Transverse colon (tissue), 4 donors: ENCODE measurements at regions of chr22 and their contacts with region 1.

Region 1: GRCh38 chr22:32528984-32529982 is 54.7 kb downstream of the FBXO7 start:
- DNase-seq: peak; percentile 87
- H3K4me3 ChIP-seq: no peak overlapping the region
- H3K27ac ChIP-seq: peak overlapping the region; percentile 27 to 76 (median 64)
- H3K4me1 ChIP-seq: peaks cover 7 to 38% (median 21%) of the 10 kb centered on the region in 4 donors
- H3K27me3 ChIP-seq: no peaks in the 10 kb centered on the region
- CTCF ChIP-seq: peak; percentile 85 to 93 (median 86)
- EP300 ChIP-seq: no peak
- POLR2A ChIP-seq: no peak

Region 2: DNA sequence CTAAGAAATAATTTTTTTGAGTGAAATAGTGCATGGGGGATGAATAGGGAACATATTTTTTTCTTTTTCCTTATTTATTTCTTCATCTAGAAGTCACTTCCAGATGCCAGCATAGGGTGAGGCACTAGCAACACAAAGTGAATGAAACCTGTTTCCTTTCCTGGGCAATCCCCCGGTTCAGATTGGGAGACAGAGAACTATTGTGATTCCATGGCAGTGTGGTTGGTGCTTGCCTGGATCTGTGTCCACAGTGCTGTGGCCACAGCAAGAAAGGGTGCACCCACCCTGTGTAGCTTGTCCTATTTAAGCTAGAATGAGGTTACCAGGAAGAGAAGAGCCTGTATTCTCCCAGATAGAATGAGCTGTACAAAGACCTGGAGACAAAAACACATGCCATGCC is 428.6 kb before region 1 on chr22:
- in situ Hi-C with region 1: no loop called
- intact Hi-C with region 1: no loop called
- DNase-seq: no peak
- H3K4me3 ChIP-seq: no peak overlapping the region
- H3K27ac ChIP-seq: no peak overlapping the region
- H3K4me1 ChIP-seq: no peaks in the 10 kb centered on the region
- H3K27me3 ChIP-seq: no peaks in the 10 kb centered on the region
- CTCF ChIP-seq: no peak
- EP300 ChIP-seq: no peak
- POLR2A ChIP-seq: no peak

Region 3: GRCh38 chr22:32622004-32622743 is 92.9 kb after region 1 on chr22:
- in situ Hi-C with region 1: no loop called
- intact Hi-C with region 1: loop called (anchors 10 kb)
- DNase-seq: peak; percentile 44
- H3K4me3 ChIP-seq: no peak overlapping the region
- H3K27ac ChIP-seq: peak overlapping the region; percentile 70 to 87 (median 82)
- H3K4me1 ChIP-seq: peaks cover 16 to 41% (median 27%) of the 10 kb centered on the region in 4 donors
- H3K27me3 ChIP-seq: no peaks in the 10 kb centered on the region
- CTCF ChIP-seq: no peak
- EP300 ChIP-seq: no peak
- POLR2A ChIP-seq: no peak

Region 4: GRCh38 chr22:32789797-32790620 is 260.7 kb after region 1 on chr22:
- in situ Hi-C with region 1: loop called (anchors 10 to 25 kb)
- intact Hi-C with region 1: loop called (anchors 2 kb)
- DNase-seq: no peak
- H3K4me3 ChIP-seq: no peak overlapping the region
- H3K27ac ChIP-seq: peak overlapping the region in 3 of 4 donors; percentile 5 to 43 (median 15)
- H3K4me1 ChIP-seq: no peaks in the 10 kb centered on the region
- H3K27me3 ChIP-seq: no peaks in the 10 kb centered on the region
- CTCF ChIP-seq: no peak
- EP300 ChIP-seq: no peak
- POLR2A ChIP-seq: no peak

Region 5: DNA sequence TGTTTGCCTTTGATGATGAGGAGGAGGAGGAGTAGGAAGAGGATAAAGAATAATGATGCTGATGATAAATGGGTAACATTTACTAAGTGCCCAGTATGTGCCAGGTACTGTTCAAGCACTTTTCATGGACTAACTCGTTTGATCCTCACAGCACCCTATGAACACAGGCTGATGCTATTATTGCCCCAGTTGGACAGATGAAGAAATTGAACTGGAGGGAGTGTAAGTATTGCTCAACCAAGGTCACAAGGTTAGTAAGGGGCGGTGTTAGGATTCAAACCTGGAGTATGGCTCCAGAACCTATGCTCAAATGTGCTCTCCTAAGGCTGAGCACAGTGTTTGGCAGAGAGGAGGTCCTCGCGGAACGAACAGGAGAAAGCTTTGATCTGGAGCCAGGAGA is 450.3 kb after region 1 on chr22:
- in situ Hi-C with region 1: loop called in 2 of 4 experiments (anchors 10 kb)
- intact Hi-C with region 1: no loop called
- DNase-seq: no peak
- H3K4me3 ChIP-seq: no peak overlapping the region
- H3K27ac ChIP-seq: no peak overlapping the region
- H3K4me1 ChIP-seq: no peaks in the 10 kb centered on the region
- H3K27me3 ChIP-seq: no peaks in the 10 kb centered on the region
- CTCF ChIP-seq: no peak
- EP300 ChIP-seq: no peak
- POLR2A ChIP-seq: no peak

Region 6: GRCh38 chr22:32991353-32992121 is 462.3 kb after region 1 on chr22:
- in situ Hi-C with region 1: loop called in 3 of 4 experiments (anchors 5 to 10 kb)
- intact Hi-C with region 1: loop called (anchors 5 kb)
- DNase-seq: no peak
- H3K4me3 ChIP-seq: no peak overlapping the region
- H3K27ac ChIP-seq: no peak overlapping the region
- H3K4me1 ChIP-seq: no peaks in the 10 kb centered on the region
- H3K27me3 ChIP-seq: no peaks in the 10 kb centered on the region
- CTCF ChIP-seq: no peak
- EP300 ChIP-seq: no peak
- POLR2A ChIP-seq: no peak